Caco-2 (cell line): ENCODE measurements at regions of chr3 and their contacts with region 1.

Region 1: GRCh38 chr3:63193629-63194028 is 84.5 kb upstream of the SYNPR start:
- DNase-seq: peak in 1 of 2 experiments; percentile 24
- H3K4me3 ChIP-seq: no peak overlapping the region
- H3K4me3 Mint-ChIP-seq: no peak overlapping the region
- H3K27ac Mint-ChIP-seq: no peak overlapping the region
- H3K4me1 ChIP-seq: no peaks in the 10 kb centered on the region
- H3K4me1 Mint-ChIP-seq: no peaks in the 10 kb centered on the region
- H3K27me3 ChIP-seq: no peaks in the 10 kb centered on the region
- H3K27me3 Mint-ChIP-seq: peaks cover 10% of the 10 kb centered on the region
- CTCF ChIP-seq: peak; percentile 41 to 53

Region 2: DNA sequence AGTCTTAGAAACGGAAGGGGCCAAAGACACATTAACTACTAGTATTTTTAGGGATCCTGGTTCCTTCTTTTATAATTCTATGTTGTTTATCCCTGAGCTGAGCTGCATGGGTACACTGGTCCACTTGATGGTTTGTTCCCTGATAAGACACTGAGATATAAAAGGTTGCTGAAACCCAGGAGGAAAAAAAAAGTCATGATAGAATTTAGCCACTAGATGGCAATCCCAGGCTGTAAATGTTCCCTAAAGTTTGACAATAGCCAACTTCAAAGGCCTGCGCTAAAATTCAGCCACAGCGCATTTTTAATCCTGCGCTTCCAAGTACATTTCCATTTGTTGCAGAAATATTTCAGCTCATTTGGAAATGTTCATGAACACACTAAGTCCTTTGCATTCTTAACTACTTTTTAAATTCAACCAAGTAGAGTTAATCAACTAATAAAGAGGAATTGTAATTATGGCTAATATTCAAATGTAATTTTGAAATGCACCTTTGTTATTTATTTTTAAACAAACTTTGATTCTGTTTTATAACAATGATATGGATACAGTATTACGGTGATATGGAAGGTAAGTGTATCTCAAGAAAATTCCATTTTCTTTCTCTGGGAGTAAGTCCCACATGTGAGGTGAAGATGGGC is 571.0 kb before region 1 on chr3:
- CTCF ChIA-PET with region 1: no interaction called
- POLR2A ChIA-PET with region 1: no interaction called
- intact Hi-C with region 1: loop called (anchors 1 kb)
- DNase-seq: peak in 1 of 2 experiments; percentile 44
- H3K4me3 ChIP-seq: no peak overlapping the region
- H3K4me3 Mint-ChIP-seq: no peak overlapping the region
- H3K27ac Mint-ChIP-seq: no peak overlapping the region
- H3K4me1 ChIP-seq: no peaks in the 10 kb centered on the region
- H3K4me1 Mint-ChIP-seq: no peaks in the 10 kb centered on the region
- H3K27me3 ChIP-seq: no peaks in the 10 kb centered on the region
- H3K27me3 Mint-ChIP-seq: peaks cover 14% of the 10 kb centered on the region
- CTCF ChIP-seq: peak; percentile 52 to 59

Region 3: DNA sequence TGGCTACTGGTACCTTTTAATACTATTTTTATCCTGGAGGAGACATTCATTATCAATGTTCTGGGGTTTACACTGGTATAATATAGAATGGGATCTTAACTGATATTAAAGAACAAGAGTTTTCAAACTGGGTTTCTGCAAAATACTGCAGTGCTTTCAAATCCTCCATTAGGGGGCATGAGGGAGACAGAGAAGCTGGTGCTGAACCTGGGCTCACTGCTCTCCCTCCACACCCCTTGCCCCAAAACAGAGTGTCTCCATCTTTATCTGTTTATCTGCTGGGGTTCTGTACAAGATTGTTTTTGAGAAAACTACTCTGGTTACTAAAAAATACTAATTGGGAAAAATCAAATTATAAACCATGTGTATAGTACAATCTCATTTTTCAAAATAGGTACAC is 360.1 kb before region 1 on chr3:
- CTCF ChIA-PET with region 1: no interaction called
- POLR2A ChIA-PET with region 1: no interaction called
- intact Hi-C with region 1: loop called (anchors 1 kb)
- DNase-seq: no peak
- H3K4me3 ChIP-seq: no peak overlapping the region
- H3K4me3 Mint-ChIP-seq: no peak overlapping the region
- H3K27ac Mint-ChIP-seq: no peak overlapping the region
- H3K4me1 ChIP-seq: no peaks in the 10 kb centered on the region
- H3K4me1 Mint-ChIP-seq: no peaks in the 10 kb centered on the region
- H3K27me3 ChIP-seq: no peaks in the 10 kb centered on the region
- H3K27me3 Mint-ChIP-seq: peaks cover 3% of the 10 kb centered on the region
- CTCF ChIP-seq: peak; percentile 24 to 45

Region 4: DNA sequence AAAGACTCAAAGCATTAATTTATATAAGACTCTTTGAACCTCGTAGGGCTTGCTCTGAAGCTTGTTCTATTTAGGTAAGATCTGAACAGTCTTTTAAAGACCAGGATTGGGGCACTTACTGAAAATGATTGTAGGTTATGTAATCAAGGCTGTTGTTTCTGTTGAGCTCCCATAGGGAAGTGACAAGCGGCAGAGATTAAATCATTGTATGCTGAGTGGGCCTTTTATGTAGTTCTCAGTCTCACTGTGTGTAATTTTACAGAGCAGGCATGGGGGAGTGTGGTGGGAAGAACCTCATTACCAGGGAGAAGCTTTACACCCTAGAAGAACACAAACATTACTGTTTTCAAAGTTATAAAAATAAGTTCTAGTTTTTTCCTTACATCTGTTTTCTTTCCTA is 298.8 kb after region 1 on chr3:
- CTCF ChIA-PET with region 1: no interaction called
- POLR2A ChIA-PET with region 1: no interaction called
- intact Hi-C with region 1: no loop called
- DNase-seq: no peak
- H3K4me3 ChIP-seq: no peak overlapping the region
- H3K4me3 Mint-ChIP-seq: no peak overlapping the region
- H3K27ac Mint-ChIP-seq: no peak overlapping the region
- H3K4me1 ChIP-seq: no peaks in the 10 kb centered on the region
- H3K4me1 Mint-ChIP-seq: no peaks in the 10 kb centered on the region
- H3K27me3 ChIP-seq: no peaks in the 10 kb centered on the region; the same call in 1 of the 2 replicates
- H3K27me3 Mint-ChIP-seq: peaks cover 5% of the 10 kb centered on the region
- CTCF ChIP-seq: no peak